Activated CD4-positive, alpha-beta T cell treated with anti-CD3 and anti-CD28 coated beads for 36 hours (primary cell): ENCODE measurements at regions of chr9 and their contacts with region 1.

Region 1: GRCh38 chr9:33139421-33140228 is 27.5 kb downstream of the B4GALT1 start:
- DNase-seq: no peak
- ATAC-seq: no peak
- H3K4me3 Mint-ChIP-seq: no peak overlapping the region
- H3K27ac Mint-ChIP-seq: no peak overlapping the region
- H3K4me1 Mint-ChIP-seq: peaks cover 81% of the 10 kb centered on the region
- H3K27me3 Mint-ChIP-seq: no peaks in the 10 kb centered on the region

Region 2: GRCh38 chr9:33159760-33160127 is 20.1 kb after region 1 on chr9:
- CTCF ChIA-PET with region 1: interaction called, 5 read pairs
- POLR2A ChIA-PET with region 1: interaction called, 5 read pairs
- intact Hi-C with region 1: loop called in 1 of 2 experiments (anchors 2 kb)
- DNase-seq: peak; percentile 83
- ATAC-seq: peak; percentile 80
- H3K4me3 Mint-ChIP-seq: peak overlapping the region; percentile 61
- H3K27ac Mint-ChIP-seq: peak overlapping the region; percentile 94
- H3K4me1 Mint-ChIP-seq: peaks cover 93% of the 10 kb centered on the region
- H3K27me3 Mint-ChIP-seq: no peaks in the 10 kb centered on the region